ENCODE measurements at regions of chr12 and their contacts with region 1.

Region 1: GRCh38 chr12:111396726-111397445 is 8.8 kb upstream of the SH2B3 start:
- DNase-seq: peak; percentile 75
- H3K4me3 ChIP-seq: peak overlapping the region in 1 of 3 experiments; percentile 31
- H3K27ac ChIP-seq: peak overlapping the region; percentile 36
- H3K4me1 ChIP-seq: peaks cover 10% of the 10 kb centered on the region
- H3K27me3 ChIP-seq: no peaks in the 10 kb centered on the region
- CTCF ChIP-seq: peak; percentile 73 to 100

Region 2: GRCh38 chr12:111248236-111249017 is 148.5 kb before region 1 on chr12:
- CTCF ChIA-PET with region 1: no interaction called
- dilution Hi-C with region 1: no loop called
- in situ Hi-C with region 1: no loop called
- intact Hi-C with region 1: no loop called
- DNase-seq: peak; percentile 50
- H3K4me3 ChIP-seq: no peak overlapping the region
- H3K27ac ChIP-seq: no peak overlapping the region
- H3K4me1 ChIP-seq: no peaks in the 10 kb centered on the region
- H3K27me3 ChIP-seq: peaks cover 1% of the 10 kb centered on the region
- CTCF ChIP-seq: no peak

Region 3: DNA sequence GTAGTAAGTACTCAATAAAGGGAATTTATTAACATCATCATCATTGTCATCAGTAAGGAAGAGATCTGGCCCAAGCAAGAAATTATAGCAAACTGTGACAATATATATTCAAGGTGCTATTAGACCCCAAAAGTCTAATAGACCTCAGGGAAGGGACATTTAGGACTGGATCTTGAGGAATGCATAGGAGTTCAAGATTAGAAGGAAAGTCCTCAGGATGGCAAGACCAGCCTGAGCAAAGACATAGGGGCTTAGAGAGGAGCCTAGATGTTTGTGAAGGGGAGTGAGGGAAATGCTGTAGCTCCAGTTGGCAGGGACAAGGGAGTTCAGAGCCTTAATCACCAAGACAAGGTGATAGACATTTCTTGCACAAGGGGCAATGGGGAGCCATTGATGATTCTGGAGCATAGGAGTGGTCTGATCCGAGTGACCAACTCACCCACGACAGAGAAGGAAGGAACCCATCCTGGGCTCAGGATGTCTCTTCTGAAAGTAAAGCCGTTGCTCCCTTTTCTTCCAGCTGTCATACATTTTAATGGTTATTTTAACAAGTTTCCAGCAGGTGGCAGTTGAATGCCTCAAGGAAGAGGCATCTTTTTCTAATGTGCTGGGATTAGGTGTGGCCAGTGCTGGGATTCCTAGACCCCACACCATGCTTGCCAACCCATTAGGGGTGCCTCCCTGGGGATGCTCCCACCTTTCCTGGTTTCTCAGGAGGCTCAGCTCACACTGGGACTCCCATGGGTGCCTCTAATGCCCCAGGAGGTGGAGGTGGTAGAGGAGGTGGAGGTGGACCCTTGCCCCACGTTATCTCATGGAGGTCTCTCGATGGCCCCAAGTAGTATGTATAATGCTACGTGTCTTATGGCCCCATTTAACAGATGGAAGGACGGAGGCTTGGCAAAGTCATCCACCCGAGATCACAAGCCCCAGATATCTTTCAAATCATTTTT is 65.8 kb before region 1 on chr12:
- CTCF ChIA-PET with region 1: no interaction called
- dilution Hi-C with region 1: no loop called
- in situ Hi-C with region 1: no loop called
- intact Hi-C with region 1: loop called (anchors 2 kb)
- DNase-seq: peak; percentile 37
- H3K4me3 ChIP-seq: no peak overlapping the region
- H3K27ac ChIP-seq: no peak overlapping the region
- H3K4me1 ChIP-seq: no peaks in the 10 kb centered on the region
- H3K27me3 ChIP-seq: no peaks in the 10 kb centered on the region
- CTCF ChIP-seq: peak; percentile 50 to 58

Region 4: DNA sequence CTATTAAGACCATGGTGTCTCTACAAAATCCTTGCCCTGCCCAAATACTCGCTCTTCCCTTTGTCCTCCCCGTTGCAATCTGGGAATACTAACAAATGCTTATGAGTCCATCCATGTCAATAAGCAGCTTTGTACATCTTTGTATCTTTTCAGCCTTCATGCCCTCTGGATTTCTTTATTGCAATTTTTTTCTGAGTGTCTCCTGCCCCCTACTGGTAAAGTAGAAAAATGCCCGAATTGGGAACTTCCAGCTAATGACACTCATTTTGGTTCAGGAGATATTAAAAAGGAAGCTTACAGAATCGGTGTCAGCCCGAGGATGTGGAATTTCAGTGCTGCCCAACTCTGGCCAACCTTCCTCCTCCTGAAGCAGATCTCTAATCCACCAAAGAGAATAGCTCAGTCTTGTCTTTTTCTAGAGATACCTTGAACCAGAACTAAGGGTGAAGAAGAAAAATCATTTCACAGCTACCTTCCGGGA is 54.8 kb after region 1 on chr12:
- CTCF ChIA-PET with region 1: interaction called, 10 read pairs
- dilution Hi-C with region 1: no loop called
- in situ Hi-C with region 1: loop called in 1 of 2 experiments (anchors 5 kb)
- intact Hi-C with region 1: loop called (anchors 1 kb)
- DNase-seq: peak; percentile 26
- H3K4me3 ChIP-seq: no peak overlapping the region
- H3K27ac ChIP-seq: no peak overlapping the region
- H3K4me1 ChIP-seq: no peaks in the 10 kb centered on the region
- H3K27me3 ChIP-seq: no peaks in the 10 kb centered on the region
- CTCF ChIP-seq: peak; percentile 74 to 79

Region 5: GRCh38 chr12:111529424-111530368 is 132.8 kb after region 1 on chr12:
- CTCF ChIA-PET with region 1: no interaction called
- dilution Hi-C with region 1: no loop called
- in situ Hi-C with region 1: no loop called
- intact Hi-C with region 1: loop called (anchors 1 kb)
- DNase-seq: peak; percentile 24
- H3K4me3 ChIP-seq: no peak overlapping the region
- H3K27ac ChIP-seq: no peak overlapping the region
- H3K4me1 ChIP-seq: no peaks in the 10 kb centered on the region
- H3K27me3 ChIP-seq: no peaks in the 10 kb centered on the region
- CTCF ChIP-seq: peak; percentile 60 to 73

Region 6: GRCh38 chr12:111685744-111686517 is 289.0 kb after region 1 on chr12 and contains the starts of genes ACAD10 and BRAP:
- CTCF ChIA-PET with region 1: no interaction called
- dilution Hi-C with region 1: no loop called
- in situ Hi-C with region 1: no loop called
- intact Hi-C with region 1: loop called (anchors 5 kb)
- DNase-seq: peak; percentile 95
- H3K4me3 ChIP-seq: peak within 1 kb of the TSS; percentile 84 to 96 (median 89)
- H3K27ac ChIP-seq: peak within 1 kb of the TSS; percentile 73
- H3K4me1 ChIP-seq: peaks cover 15% of the 10 kb centered on the region
- H3K27me3 ChIP-seq: no peaks in the 10 kb centered on the region
- CTCF ChIP-seq: no peak
- total RNA-seq, gene ACAD10: 19.4 to 20.0 TPM
- total RNA-seq, gene BRAP: 20.7 to 25.0 TPM

Region 7: GRCh38 chr12:111812881-111813741 is 416.2 kb after region 1 on chr12:
- CTCF ChIA-PET with region 1: no interaction called
- dilution Hi-C with region 1: no loop called
- in situ Hi-C with region 1: no loop called
- intact Hi-C with region 1: loop called (anchors 10 kb)
- DNase-seq: peak; percentile 68
- H3K4me3 ChIP-seq: no peak overlapping the region
- H3K27ac ChIP-seq: no peak overlapping the region
- H3K4me1 ChIP-seq: no peaks in the 10 kb centered on the region
- H3K27me3 ChIP-seq: no peaks in the 10 kb centered on the region
- CTCF ChIP-seq: peak; percentile 65 to 85

Measured in mammary epithelial cell (primary cell).